Activated T-helper 2 cell treated with anti-CD3 and anti-CD28 coated beads, Interferon-gamma antibody, Interleukin-2, Interleukin-4, amounts not matched to agents 10 μg/mL and 5 μg/mL and 100 μg/mL, durations not matched to agents 14 hours and 24 hours and 36 hours (primary cell): ENCODE measurements at regions of chr15 and their contacts with region 1.

Region 1: GRCh38 chr15:74540761-74541493 is at the start of gene ARID3B:
- DNase-seq: peak; percentile 94
- H3K4me3 Mint-ChIP-seq: peak within 1 kb of the TSS; percentile 94
- H3K27ac Mint-ChIP-seq: peak within 1 kb of the TSS; percentile 98
- H3K4me1 Mint-ChIP-seq: peaks cover 46% of the 10 kb centered on the region
- H3K27me3 Mint-ChIP-seq: no peaks in the 10 kb centered on the region
- total RNA-seq, gene ARID3B: 35.6 and 41.2 TPM in 2 replicates

Region 2: GRCh38 chr15:74373731-74374647 is 166.9 kb before region 1 on chr15:
- intact Hi-C with region 1: loop called (anchors 2 kb)
- DNase-seq: peak; percentile 91
- H3K4me3 Mint-ChIP-seq: peak overlapping the region; percentile 79
- H3K27ac Mint-ChIP-seq: peak overlapping the region; percentile 60
- H3K4me1 Mint-ChIP-seq: peaks cover 28% of the 10 kb centered on the region
- H3K27me3 Mint-ChIP-seq: peaks cover 19% of the 10 kb centered on the region

Region 3: GRCh38 chr15:74460871-74461846 is 79.8 kb before region 1 on chr15 and contains the start of gene UBL7:
- intact Hi-C with region 1: loop called (anchors 1 kb)
- DNase-seq: peak; percentile 95
- H3K4me3 Mint-ChIP-seq: peak within 1 kb of the TSS; percentile 96
- H3K27ac Mint-ChIP-seq: peak within 1 kb of the TSS; percentile 96
- H3K4me1 Mint-ChIP-seq: peaks cover 44% of the 10 kb centered on the region
- H3K27me3 Mint-ChIP-seq: no peaks in the 10 kb centered on the region
- total RNA-seq, gene UBL7: 55.3 and 59.1 TPM in 2 replicates

Region 4: DNA sequence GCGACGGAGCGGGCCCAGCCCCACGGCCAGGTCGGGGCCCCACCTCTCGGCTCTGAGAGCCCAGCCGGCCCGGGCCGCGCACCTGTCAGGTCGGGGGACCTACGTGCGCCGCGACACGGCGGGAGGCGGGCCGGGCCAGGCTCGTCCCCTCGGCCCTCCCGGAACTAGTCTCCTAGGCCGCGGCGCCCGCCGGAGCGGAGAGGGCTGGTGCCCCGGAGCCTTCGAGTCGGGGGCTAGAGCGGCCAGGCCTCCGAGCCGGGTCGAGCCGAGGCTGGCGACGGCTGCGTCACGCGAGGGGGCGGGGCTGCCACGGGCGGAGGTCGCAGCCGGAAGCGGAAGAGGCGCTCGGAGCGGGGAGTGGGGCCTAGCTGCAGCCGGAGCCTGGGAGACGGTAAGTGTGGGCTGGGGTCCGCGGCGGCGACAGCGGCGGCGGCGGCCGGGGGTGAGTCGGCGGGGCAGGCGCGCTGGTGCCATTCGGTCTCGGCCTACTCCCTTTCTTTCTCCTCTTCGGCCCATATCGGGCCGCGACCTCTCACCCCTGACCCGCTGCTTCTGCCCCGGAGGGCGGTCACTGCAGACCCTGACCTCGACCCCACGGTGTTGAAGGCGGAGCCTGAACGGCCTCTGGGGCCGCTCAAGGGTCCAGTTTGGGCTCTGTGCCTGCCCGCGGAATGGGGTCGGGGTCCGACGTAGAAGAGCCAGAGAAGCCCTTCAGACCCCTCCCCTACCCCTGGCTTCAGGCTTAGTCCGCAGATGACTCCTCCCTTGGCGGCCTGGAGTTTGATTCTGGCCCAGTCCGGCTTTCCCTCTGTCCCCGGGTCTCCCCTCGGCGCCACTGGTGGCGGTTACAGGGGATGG is 74.8 kb after region 1 on chr15 and contains the start of gene CLK3:
- intact Hi-C with region 1: loop called (anchors 1 kb)
- DNase-seq: peak; percentile 95
- H3K4me3 Mint-ChIP-seq: peak within 1 kb of the TSS; percentile 96
- H3K27ac Mint-ChIP-seq: peak within 1 kb of the TSS; percentile 97
- H3K4me1 Mint-ChIP-seq: peaks cover 28% of the 10 kb centered on the region
- H3K27me3 Mint-ChIP-seq: no peaks in the 10 kb centered on the region
- total RNA-seq, gene CLK3: 119 and 122 TPM in 2 replicates

Region 5: DNA sequence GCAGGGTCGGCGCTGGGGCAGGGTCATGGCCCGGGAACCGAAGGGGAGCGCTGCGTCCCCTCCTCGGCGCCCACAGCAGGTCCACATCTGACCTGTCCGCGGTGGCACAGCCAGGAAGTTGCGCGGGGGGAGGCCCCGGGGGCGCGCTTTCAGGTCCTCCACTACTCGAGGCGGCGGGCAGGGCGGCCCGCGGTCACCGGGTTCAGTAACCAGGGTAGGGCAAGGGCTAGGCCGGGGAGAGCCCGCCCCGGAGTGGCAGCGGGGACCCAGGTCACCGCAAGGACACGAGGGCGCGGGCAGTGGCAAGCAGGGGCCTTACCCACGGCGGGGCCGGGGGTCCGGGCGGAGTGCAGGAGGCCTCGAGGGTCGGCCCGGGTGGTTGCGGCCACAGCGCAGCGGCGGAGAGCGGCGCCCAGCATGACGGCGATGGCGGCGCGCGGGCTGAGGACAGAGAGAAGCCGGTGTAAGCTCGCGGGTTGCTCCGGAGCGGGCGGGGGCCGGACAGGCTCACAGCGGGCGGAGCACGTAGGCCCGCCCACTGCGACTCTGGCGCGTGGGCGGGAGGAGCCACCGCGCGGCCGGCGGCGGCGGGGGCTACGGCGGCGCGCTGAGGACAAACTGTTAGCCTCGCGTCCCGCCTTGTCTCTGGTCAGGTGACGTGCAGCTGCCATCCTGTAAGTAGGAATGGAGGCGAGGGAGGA is 396.8 kb after region 1 on chr15 and contains the start of gene COX5A:
- intact Hi-C with region 1: loop called (anchors 5 kb)
- DNase-seq: peak; percentile 92
- H3K4me3 Mint-ChIP-seq: peak within 1 kb of the TSS; percentile 85
- H3K27ac Mint-ChIP-seq: peak within 1 kb of the TSS; percentile 90
- H3K4me1 Mint-ChIP-seq: peaks cover 20% of the 10 kb centered on the region
- H3K27me3 Mint-ChIP-seq: no peaks in the 10 kb centered on the region
- total RNA-seq, gene COX5A: 311 and 333 TPM in 2 replicates